ENCODE measurements at regions of chr9 and their contacts with region 1.

Region 1: DNA sequence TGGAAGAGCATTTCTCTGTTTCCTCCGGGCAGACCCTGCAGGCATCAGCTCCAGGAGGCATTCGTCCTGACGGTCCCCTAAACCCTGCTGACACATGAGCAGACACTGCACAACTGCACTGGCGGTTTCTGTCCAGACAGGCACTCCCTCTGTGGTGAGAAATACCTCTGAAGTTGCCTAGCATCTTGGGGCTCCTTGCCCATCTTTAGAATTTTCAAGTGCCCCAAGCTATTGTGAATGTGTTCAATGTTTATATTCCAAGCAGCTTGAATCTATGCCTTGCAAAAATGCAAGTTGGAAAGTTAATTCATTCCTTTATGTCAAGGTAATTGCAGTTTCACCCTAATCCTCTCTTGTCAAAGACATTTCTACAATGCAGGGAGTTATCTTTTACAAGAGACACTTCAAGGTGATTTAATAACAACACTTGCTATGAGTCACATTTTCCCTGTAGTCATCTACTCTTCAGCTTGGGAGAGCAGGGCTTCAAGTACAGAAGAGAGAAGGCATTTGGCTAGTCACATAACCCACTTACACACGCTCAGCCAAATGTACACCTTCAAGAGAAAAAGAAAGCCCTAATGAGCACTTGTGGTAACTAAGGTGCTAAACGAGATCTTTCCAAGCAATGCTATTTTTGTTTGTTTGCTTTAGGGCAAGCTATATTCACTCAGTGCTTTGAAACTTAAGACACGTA is 302.5 kb downstream of the MLLT3 start:
- DNase-seq: peak; percentile 52
- ATAC-seq: peak; percentile 74
- H3K4me3 Mint-ChIP-seq: no peak overlapping the region
- H3K27ac Mint-ChIP-seq: peak overlapping the region; percentile 29
- H3K4me1 Mint-ChIP-seq: peaks cover 90% of the 10 kb centered on the region
- H3K27me3 Mint-ChIP-seq: no peaks in the 10 kb centered on the region

Region 2: GRCh38 chr9:20054734-20055133 is 265.1 kb before region 1 on chr9:
- CTCF ChIA-PET with region 1: no interaction called
- POLR2A ChIA-PET with region 1: no interaction called
- intact Hi-C with region 1: no loop called
- DNase-seq: no peak
- ATAC-seq: no peak
- H3K4me3 Mint-ChIP-seq: no peak overlapping the region
- H3K27ac Mint-ChIP-seq: no peak overlapping the region
- H3K4me1 Mint-ChIP-seq: no peaks in the 10 kb centered on the region
- H3K27me3 Mint-ChIP-seq: peaks cover 10% of the 10 kb centered on the region

Region 3: DNA sequence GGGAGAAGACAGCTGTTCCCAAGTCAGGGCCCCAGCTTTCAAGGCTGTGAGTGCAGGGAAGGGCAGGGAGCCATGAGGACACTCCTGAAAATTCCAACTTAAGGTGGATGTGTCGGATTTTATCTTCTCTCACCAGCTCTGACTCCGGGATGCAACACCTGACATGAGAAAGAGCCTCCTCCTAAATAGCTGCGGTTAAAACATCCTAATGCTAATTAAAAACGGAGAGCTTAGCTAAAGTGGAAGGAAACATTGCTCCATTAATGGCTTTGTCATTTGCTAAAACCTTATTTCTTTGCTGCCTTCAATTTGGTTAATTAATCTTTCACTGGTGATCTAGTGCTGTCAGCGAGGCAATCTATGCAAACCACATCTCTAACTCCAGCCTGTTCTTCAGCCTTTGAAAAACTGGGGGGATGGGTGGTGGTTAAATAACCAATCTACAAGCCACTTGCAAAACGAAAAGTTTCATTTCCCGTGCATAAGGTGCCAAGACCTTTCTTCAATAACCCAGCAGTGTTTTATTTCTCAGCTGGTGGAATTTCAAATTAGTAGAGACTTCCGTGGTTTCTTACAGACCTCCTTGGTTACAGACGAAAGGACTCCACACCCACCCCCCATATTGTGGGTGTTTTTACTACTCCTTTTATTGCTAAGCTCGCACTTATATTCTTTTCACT is 77.1 kb before region 1 on chr9:
- CTCF ChIA-PET with region 1: no interaction called
- POLR2A ChIA-PET with region 1: no interaction called
- intact Hi-C with region 1: loop called (anchors 2 to 5 kb)
- DNase-seq: peak; percentile 30
- ATAC-seq: peak; percentile 82
- H3K4me3 Mint-ChIP-seq: peak overlapping the region; percentile 4
- H3K27ac Mint-ChIP-seq: no peak overlapping the region
- H3K4me1 Mint-ChIP-seq: peaks cover 44% of the 10 kb centered on the region
- H3K27me3 Mint-ChIP-seq: peaks cover 19% of the 10 kb centered on the region

Region 4: DNA sequence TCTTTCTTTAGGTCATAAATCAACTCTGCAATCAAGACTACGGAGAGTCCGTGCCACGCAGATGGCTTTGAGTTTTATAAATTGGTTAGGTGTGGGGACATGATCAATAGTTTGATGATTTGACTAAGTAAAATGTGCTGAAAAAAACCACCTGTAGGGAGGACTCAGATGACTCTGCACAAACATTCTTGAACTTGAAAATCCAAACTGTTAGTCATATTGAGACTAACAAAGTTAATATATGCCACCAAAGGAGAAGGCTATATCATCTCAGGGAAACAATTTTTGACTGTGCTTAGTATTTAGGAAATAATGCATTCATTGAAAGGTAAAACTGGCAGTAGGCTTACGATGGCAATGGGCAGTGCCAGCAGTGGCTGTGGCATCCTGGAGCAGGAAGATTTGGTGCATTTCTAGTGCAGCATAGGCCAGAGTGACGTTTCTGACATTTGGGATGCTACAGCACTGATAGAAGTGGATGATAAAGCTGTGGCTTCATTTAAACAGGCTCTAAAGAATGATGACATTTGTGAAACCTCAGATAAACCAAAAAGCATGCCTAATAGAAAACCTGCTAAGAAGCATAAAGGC is 11.4 kb after region 1 on chr9:
- CTCF ChIA-PET with region 1: interaction called, 3 read pairs
- POLR2A ChIA-PET with region 1: no interaction called
- intact Hi-C with region 1: loop called in 1 of 2 experiments (anchors 1 kb)
- DNase-seq: no peak
- ATAC-seq: peak; percentile 93
- H3K4me3 Mint-ChIP-seq: no peak overlapping the region
- H3K27ac Mint-ChIP-seq: no peak overlapping the region
- H3K4me1 Mint-ChIP-seq: peaks cover 13% of the 10 kb centered on the region
- H3K27me3 Mint-ChIP-seq: no peaks in the 10 kb centered on the region

Region 5: DNA sequence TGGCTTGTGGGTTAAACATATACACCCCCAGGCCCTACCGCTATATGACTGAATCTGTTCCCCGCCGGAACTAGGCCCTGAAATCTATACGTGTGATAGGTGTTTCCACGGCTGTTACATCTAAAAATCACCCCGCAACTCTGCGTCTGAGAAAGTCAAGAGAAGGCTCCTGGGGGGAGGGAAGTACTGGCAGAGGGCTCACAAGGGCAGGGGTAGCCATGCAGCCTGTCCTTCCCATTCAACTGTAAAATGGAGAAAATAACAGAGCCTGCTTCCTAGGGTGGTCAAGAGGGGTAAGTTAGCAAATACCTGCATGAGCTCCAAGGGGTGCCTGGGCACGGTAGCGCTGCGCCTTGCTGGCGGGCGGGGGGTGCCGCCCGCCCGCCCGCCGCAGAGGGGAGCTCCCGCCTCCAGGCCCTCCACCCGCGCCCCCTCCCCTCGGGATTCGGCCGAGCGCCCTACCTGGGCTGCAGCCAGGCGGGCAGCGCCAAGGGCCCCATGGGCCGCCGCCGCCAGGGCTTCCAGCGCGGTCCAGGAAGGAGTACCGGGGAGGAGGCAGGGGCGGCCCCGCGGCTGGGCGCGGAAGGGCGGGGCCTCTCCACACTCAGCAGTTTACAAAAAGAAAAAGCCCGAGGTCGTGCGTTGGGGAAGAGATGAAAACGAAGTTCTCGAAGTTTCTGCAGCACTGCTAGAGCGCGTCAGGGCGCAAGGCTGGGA is 711.5 kb after region 1 on chr9 and contains the start of gene HACD4:
- CTCF ChIA-PET with region 1: no interaction called
- POLR2A ChIA-PET with region 1: no interaction called
- intact Hi-C with region 1: loop called in 1 of 2 experiments (anchors 2 kb)
- DNase-seq: peak; percentile 79
- ATAC-seq: peak; percentile 79
- H3K4me3 Mint-ChIP-seq: peak within 1 kb of the TSS; percentile 53
- H3K27ac Mint-ChIP-seq: peak within 1 kb of the TSS; percentile 71
- H3K4me1 Mint-ChIP-seq: peaks cover 26% of the 10 kb centered on the region
- H3K27me3 Mint-ChIP-seq: no peaks in the 10 kb centered on the region
- total RNA-seq, gene HACD4: 2.7 to 3.0 TPM

Region 6: GRCh38 chr9:21096172-21096900 is 776.5 kb after region 1 on chr9:
- CTCF ChIA-PET with region 1: no interaction called
- POLR2A ChIA-PET with region 1: no interaction called
- intact Hi-C with region 1: loop called in 1 of 2 experiments (anchors 5 kb)
- DNase-seq: peak; percentile 64
- ATAC-seq: peak; percentile 95
- H3K4me3 Mint-ChIP-seq: peak overlapping the region; percentile 58
- H3K27ac Mint-ChIP-seq: peak overlapping the region; percentile 87
- H3K4me1 Mint-ChIP-seq: peaks cover 31% of the 10 kb centered on the region
- H3K27me3 Mint-ChIP-seq: no peaks in the 10 kb centered on the region

Measured in activated CD4-positive, alpha-beta T cell treated with anti-CD3 and anti-CD28 coated beads for 36 hours (primary cell).